Spleen (tissue), 13 donors: ENCODE measurements at regions of chr1 and their contacts with region 1.

Region 1: GRCh38 chr1:61049850-61050540 is 32.4 kb upstream of the NFIA start:
- DNase-seq: peak; percentile 96
- H3K4me3 ChIP-seq: peak overlapping the region; percentile 67 to 93 (median 70)
- H3K27ac ChIP-seq: peak overlapping the region; percentile 37 to 93 (median 86)
- H3K4me1 ChIP-seq: peaks cover 22 to 56% (median 47%) of the 10 kb centered on the region in 6 donors
- H3K27me3 ChIP-seq: peaks cover 0 to 56% (median 9%) of the 10 kb centered on the region in 7 donors
- CTCF ChIP-seq: peak; percentile 82 to 99 (median 95)
- POLR2A ChIP-seq: no peak

Region 2: DNA sequence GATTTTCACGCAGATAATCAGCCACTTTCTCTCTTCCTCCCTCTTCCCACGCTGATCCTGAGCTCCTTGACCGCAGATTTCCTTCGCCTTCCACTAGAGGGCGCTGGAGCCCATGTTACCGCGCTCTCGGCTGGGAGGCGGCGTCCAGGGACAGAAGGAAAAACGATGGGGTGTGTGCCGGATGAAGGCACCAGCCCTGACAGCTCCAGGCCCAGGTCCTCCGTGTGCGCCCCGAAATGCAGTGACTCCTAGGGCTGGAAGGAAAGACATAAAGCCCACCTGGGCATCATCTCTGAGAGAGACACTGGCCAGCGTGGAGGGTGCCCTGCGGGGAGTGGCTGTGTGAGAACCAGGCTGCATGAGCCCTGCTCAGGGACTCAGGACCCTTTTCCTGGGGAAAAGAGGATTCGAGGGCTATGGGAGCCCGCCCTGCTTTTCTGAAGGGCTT is 1078.5 kb before region 1 on chr1:
- intact Hi-C with region 1: loop called (anchors 10 kb)
- DNase-seq: peak; percentile 83
- H3K4me3 ChIP-seq: peak overlapping the region in 1 of 8 donors; percentile 32
- H3K27ac ChIP-seq: no peak overlapping the region
- H3K4me1 ChIP-seq: peaks cover 4 to 11% (median 7%) of the 10 kb centered on the region in 6 donors
- H3K27me3 ChIP-seq: peaks cover 0 to 32% (median under 1%) of the 10 kb centered on the region in 7 donors
- CTCF ChIP-seq: peak; percentile 37 to 88 (median 76)
- POLR2A ChIP-seq: no peak

Region 3: DNA sequence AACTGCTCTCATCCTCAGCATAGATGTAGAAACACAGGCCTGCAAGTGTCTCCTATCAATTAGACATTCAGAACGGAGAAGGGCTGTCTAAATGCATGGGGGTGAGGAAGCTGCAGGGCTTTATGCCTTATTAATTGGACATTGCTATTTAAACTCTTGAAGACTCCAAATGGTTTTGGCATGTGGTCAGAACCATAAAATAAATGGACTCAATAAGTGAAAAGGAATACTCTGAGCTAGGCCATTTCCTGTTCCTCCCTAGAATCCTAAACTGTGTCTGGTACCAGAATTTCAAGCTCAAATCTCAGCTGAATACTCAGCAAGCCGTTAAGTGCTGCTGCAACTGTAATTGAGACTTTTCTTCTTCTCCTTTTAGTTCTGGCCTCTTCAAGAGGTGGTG is 896.0 kb before region 1 on chr1:
- intact Hi-C with region 1: loop called (anchors 10 kb)
- DNase-seq: no peak
- H3K4me3 ChIP-seq: no peak overlapping the region
- H3K27ac ChIP-seq: peak overlapping the region in 5 of 8 donors; percentile 2 to 45 (median 43)
- H3K4me1 ChIP-seq: peaks cover 0 to 6% (median 0%) of the 10 kb centered on the region in 6 donors
- H3K27me3 ChIP-seq: no peaks in the 10 kb centered on the region
- CTCF ChIP-seq: no peak
- POLR2A ChIP-seq: no peak

Region 4: DNA sequence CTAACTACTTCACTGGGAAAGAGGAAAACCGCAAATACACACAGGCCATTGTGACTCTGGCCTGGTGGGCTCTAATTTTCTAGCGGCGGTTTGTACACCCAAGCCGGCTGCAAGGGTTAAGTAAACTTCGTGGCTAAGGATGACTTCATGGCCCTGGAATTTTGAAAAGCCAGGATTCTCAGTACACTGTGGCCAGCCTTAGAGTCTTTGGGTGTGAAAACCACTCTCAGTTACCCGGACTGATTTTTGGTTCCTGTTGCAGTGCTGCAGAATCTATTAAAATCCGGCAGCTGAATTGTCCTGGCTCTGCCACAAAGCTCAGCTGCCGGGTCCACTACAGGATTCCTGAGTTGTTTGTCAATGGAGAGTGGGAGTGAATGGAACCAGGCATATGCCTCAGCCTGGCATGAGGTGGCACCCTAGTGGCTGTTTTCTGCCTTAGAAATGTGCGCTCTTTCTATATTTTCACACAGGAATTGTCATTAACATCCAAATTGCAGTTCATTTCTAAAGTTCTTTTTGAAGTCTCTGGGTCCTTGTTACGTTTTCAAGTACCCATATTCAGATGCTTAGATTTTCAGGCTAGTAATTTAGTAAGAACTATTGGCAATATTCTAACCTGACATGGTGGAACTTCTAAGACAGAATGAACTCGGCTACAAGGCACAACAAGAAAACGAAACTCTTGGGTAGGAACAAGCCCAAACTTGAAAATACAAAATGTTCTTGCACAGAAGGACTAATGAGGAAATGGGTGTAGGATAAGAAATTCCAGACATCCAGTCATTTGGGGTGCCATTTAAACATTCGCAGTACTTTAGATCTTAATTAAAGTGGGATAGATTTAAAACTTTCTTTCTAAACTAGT is 288.2 kb after region 1 on chr1:
- intact Hi-C with region 1: loop called (anchors 10 kb)
- DNase-seq: no peak
- H3K4me3 ChIP-seq: no peak overlapping the region
- H3K27ac ChIP-seq: peak overlapping the region; percentile 0 to 67 (median 55)
- H3K4me1 ChIP-seq: peaks cover 0 to 23% (median 12%) of the 10 kb centered on the region in 6 donors
- H3K27me3 ChIP-seq: no peaks in the 10 kb centered on the region
- CTCF ChIP-seq: peak in 10 of 11 experiments; percentile 23 to 63 (median 55)
- POLR2A ChIP-seq: no peak

Region 5: GRCh38 chr1:61453111-61453961 is 403.3 kb after region 1 on chr1:
- intact Hi-C with region 1: loop called (anchors 5 kb)
- DNase-seq: peak; percentile 85
- H3K4me3 ChIP-seq: no peak overlapping the region
- H3K27ac ChIP-seq: peak overlapping the region in 5 of 8 donors; percentile 31 to 61 (median 39)
- H3K4me1 ChIP-seq: peaks cover 6 to 51% (median 23%) of the 10 kb centered on the region in 6 donors
- H3K27me3 ChIP-seq: no peaks in the 10 kb centered on the region
- CTCF ChIP-seq: peak; percentile 29 to 84 (median 71)
- POLR2A ChIP-seq: no peak

Region 6: GRCh38 chr1:61851849-61852669 is 802.1 kb after region 1 on chr1:
- intact Hi-C with region 1: loop called (anchors 10 kb)
- DNase-seq: no peak
- H3K4me3 ChIP-seq: no peak overlapping the region
- H3K27ac ChIP-seq: no peak overlapping the region
- H3K4me1 ChIP-seq: no peaks in the 10 kb centered on the region
- H3K27me3 ChIP-seq: no peaks in the 10 kb centered on the region
- CTCF ChIP-seq: peak in 9 of 11 experiments; percentile 20 to 78 (median 64)
- POLR2A ChIP-seq: no peak